ENCODE measurements at regions of chr3 and their contacts with region 1.

Region 1: GRCh38 chr3:141249041-141249440 is 17.4 kb downstream of the PXYLP1 start:
- DNase-seq: no peak
- ATAC-seq: no peak
- H3K4me3 ChIP-seq: no peak overlapping the region
- H3K27ac ChIP-seq: no peak overlapping the region
- H3K4me1 ChIP-seq: no peaks in the 10 kb centered on the region
- H3K27me3 ChIP-seq: no peaks in the 10 kb centered on the region; a peak in 1 of 4 replicates
- CTCF ChIP-seq: no peak
- EP300 ChIP-seq: no peak
- POLR2A ChIP-seq: no peak
- RAD21 ChIP-seq: no peak

Region 2: GRCh38 chr3:142087676-142088075 is 838.6 kb after region 1 on chr3:
- CTCF ChIA-PET with region 1: no interaction called
- POLR2A ChIA-PET with region 1: interaction called, 10 read pairs
- RAD21 ChIA-PET with region 1: no interaction called
- SMC1A ChIA-PET with region 1: no interaction called
- in situ Hi-C with region 1: no loop called
- intact Hi-C with region 1: no loop called
- DNase-seq: no peak
- ATAC-seq: no peak
- H3K4me3 ChIP-seq: no peak overlapping the region
- H3K27ac ChIP-seq: no peak overlapping the region
- H3K4me1 ChIP-seq: no peaks in the 10 kb centered on the region
- H3K27me3 ChIP-seq: no peaks in the 10 kb centered on the region
- CTCF ChIP-seq: no peak
- EP300 ChIP-seq: no peak
- POLR2A ChIP-seq: no peak
- RAD21 ChIP-seq: no peak